Activated naive CD4-positive, alpha-beta T cell treated with anti-CD3 and anti-CD28 coated beads for 36 hours (primary cell): ENCODE measurements at regions of chr11 and their contacts with region 1.

Region 1: DNA sequence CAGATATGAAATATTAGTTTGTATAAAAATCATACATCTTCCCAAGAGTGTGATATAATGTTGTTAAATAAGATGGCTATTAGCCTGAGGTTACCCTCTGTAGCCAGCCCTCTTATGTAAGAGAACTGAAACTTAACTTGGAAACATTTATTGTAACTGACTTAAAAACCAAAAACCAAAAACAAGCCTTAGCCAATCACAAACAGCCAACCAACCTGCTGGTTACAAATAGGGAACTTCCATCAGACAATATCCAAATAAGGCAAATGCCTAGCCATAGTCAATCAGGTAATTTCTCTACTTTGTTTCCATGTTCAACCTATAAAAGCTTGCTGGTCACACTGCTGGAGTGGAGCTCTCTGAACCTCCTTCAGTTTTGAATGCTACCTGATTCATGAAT is 14.1 kb downstream of the KBTBD3 start:
- DNase-seq: no peak
- H3K4me3 Mint-ChIP-seq: no peak overlapping the region
- H3K27ac Mint-ChIP-seq: no peak overlapping the region
- H3K4me1 Mint-ChIP-seq: peaks cover 12% of the 10 kb centered on the region
- H3K27me3 Mint-ChIP-seq: no peaks in the 10 kb centered on the region

Region 2: DNA sequence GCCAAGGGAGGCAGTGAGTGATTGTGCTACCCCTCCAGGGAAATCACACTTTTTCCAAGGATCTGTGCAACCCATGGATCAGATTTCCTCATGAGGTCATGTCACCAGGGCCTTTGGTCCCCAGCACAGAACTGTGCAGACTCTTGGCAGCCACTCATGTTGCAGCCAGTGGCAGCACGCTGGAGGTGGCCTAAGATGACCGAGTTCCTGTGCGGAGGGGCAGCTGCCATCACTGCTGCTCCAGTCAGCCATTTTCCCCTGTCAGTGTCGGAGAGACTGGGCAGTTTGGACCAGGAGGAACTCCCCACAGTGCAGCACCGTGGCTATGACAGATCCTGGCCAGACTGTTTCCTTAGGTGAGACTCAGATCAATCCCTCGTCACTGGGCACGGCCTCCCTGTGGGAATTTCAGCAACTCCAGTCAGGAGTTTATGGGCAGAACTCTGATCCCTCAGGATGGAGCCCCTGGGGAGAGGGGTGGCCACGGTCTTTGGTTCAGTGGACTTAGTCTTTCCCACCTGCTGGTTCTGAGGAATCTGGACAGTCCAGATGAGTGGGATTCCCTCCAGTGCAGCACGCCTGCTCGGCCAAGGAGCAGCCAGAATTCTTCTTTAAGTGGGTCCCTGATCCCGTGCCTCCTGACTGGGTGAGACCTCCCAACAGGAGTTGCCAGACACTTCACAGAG is 728.8 kb before region 1 on chr11:
- CTCF ChIA-PET with region 1: no interaction called
- intact Hi-C with region 1: no loop called
- DNase-seq: no peak
- H3K4me3 Mint-ChIP-seq: no peak overlapping the region
- H3K27ac Mint-ChIP-seq: no peak overlapping the region
- H3K4me1 Mint-ChIP-seq: no peaks in the 10 kb centered on the region
- H3K27me3 Mint-ChIP-seq: peaks cover 10% of the 10 kb centered on the region

Region 3: GRCh38 chr11:106021967-106022794 is 40.8 kb before region 1 on chr11 and contains the start of gene MSANTD4:
- CTCF ChIA-PET with region 1: no interaction called
- intact Hi-C with region 1: loop called (anchors 1 kb)
- DNase-seq: peak; percentile 99
- H3K4me3 Mint-ChIP-seq: peak within 1 kb of the TSS; percentile 93
- H3K27ac Mint-ChIP-seq: peak within 1 kb of the TSS; percentile 85
- H3K4me1 Mint-ChIP-seq: peaks cover 40% of the 10 kb centered on the region
- H3K27me3 Mint-ChIP-seq: peaks cover 3% of the 10 kb centered on the region
- total RNA-seq, gene MSANTD4: 11.5 to 12.0 TPM